Heart left ventricle (tissue), 16 donors: ENCODE measurements at regions of chr2 and their contacts with region 1.

Region 1: DNA sequence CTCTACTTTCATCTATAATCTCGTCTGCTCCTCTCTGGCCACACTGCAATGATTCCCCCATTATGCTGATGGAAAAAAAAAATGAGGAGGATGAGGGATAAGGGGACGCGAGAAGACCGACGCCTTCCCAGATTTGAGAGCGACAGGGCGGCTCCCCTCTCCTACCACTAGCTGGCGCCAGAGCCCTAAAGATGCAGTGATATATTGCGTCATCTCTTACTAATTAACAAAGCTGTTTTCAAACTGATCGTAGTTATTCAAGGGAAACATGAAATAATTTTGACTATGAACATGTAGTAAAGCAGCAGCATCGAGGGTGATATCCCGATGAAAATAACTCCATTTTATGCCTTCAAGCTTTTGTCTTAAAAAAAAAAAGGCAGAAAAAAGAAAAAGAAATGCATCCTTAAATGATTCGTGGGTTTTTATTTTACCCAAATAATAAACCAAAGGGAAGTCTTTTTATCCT is 48.0 kb upstream of the HNRNPA3 start:
- DNase-seq: peak; percentile 78 to 89 (median 81)
- ATAC-seq: peak; percentile 86 to 93 (median 89)
- H3K4me3 ChIP-seq: peak overlapping the region in 11 of 12 donors; percentile 23 to 64 (median 47)
- H3K27ac ChIP-seq: peak overlapping the region; percentile 80 to 93 (median 85)
- H3K4me1 ChIP-seq: peaks cover 5 to 28% (median 17%) of the 10 kb centered on the region in 12 donors
- H3K27me3 ChIP-seq: no peaks in the 10 kb centered on the region
- CTCF ChIP-seq: peak; percentile 99 to 100 (median 100)
- POLR2A ChIP-seq: no peak

Region 2: DNA sequence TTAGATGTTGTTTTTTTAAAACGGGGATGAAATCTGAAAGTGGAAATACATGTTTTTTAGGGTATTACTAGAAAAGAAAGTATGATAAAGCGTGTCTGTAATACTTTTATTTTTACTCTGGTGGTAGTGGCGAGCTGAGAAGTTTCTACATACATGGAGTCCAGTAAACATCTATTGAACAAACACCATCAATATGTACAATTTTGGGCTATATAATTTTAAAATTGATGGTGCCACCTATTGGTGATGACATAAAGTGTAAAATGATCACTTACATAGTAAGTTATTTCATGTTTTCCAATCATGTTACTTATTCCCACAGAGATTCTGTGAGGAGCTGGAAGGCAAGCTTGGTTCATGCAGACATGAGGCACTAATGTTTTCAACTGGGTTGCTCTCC is 131.4 kb after region 1 on chr2:
- intact Hi-C with region 1: loop called (anchors 1 to 10 kb)
- DNase-seq: no peak
- ATAC-seq: peak in 2 of 4 donors; percentile 38 to 42
- H3K4me3 ChIP-seq: peak overlapping the region in 2 of 12 donors; percentile 4 to 21
- H3K27ac ChIP-seq: peak overlapping the region in 11 of 12 donors; percentile 13 to 72 (median 22)
- H3K4me1 ChIP-seq: peaks cover 0 to 14% (median 0%) of the 10 kb centered on the region in 12 donors
- H3K27me3 ChIP-seq: no peaks in the 10 kb centered on the region
- CTCF ChIP-seq: peak in 10 of 12 donors; percentile 13 to 61 (median 46)
- POLR2A ChIP-seq: no peak

Region 3: GRCh38 chr2:177604271-177605065 is 439.9 kb after region 1 on chr2:
- intact Hi-C with region 1: loop called in 4 of 10 experiments (anchors 10 kb)
- DNase-seq: peak in 1 of 5 donors; percentile 13
- ATAC-seq: peak in 3 of 4 donors; percentile 39 to 78 (median 52)
- H3K4me3 ChIP-seq: peak overlapping the region in 1 of 12 donors; percentile 9
- H3K27ac ChIP-seq: peak overlapping the region in 5 of 12 donors; percentile 1 to 22 (median 10)
- H3K4me1 ChIP-seq: peaks cover 0 to 7% (median under 1%) of the 10 kb centered on the region in 12 donors
- H3K27me3 ChIP-seq: no peaks in the 10 kb centered on the region
- CTCF ChIP-seq: peak; percentile 47 to 76 (median 64)
- POLR2A ChIP-seq: no peak

Region 4: GRCh38 chr2:177724398-177725287 is 560.0 kb after region 1 on chr2:
- intact Hi-C with region 1: loop called in 4 of 10 experiments (anchors 2 to 10 kb)
- DNase-seq: peak in 3 of 5 donors; percentile 36 to 53 (median 40)
- ATAC-seq: peak; percentile 64 to 83 (median 74)
- H3K4me3 ChIP-seq: no peak overlapping the region
- H3K27ac ChIP-seq: peak overlapping the region in 2 of 12 donors; percentile 3 to 24
- H3K4me1 ChIP-seq: peaks cover 0 to 9% (median 0%) of the 10 kb centered on the region in 12 donors
- H3K27me3 ChIP-seq: peaks cover 0 to 5% (median 0%) of the 10 kb centered on the region in 9 donors
- CTCF ChIP-seq: peak; percentile 80 to 95 (median 86)
- POLR2A ChIP-seq: no peak